HEK293 (cell line): ENCODE measurements at regions of chr4 and their contacts with region 1.

Region 1: GRCh38 chr4:162497564-162498167 is 333.9 kb upstream of the FSTL5 start:
- H3K4me3 ChIP-seq: no peak overlapping the region
- H3K27ac ChIP-seq: no peak overlapping the region
- H3K4me1 ChIP-seq: no peaks in the 10 kb centered on the region
- CTCF ChIP-seq: 0 out of 2 replicates have a peak, but pooled peaks have one; percentile 36

Region 2: DNA sequence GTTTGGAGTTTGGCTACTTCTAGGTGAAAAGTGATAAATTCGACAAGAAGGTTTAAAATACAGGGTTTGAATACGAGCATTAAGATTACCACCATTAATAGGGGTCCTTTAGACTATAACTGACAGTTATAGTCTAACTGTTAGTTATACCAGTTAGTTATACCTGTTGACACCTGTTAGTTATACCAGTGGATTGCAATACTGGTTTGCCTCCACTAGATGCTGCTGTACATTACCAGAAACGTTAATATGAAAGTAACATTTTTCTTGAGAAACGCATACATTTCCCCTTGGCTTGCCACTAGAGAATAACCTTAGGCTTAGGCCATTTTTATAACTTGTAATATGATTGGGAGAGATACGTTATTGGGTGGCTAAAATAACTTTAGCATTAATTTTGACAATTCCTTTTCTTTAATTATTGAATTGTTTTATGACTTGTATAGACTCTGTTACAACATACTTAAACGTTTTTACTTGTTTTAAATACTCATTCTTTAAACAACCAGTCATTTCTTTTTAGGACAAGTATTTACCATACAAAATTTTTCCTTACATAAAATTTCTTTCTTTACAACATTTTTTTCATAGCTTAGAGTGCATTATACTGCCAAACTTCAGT is 1245.0 kb before region 1 on chr4:
- CTCF ChIA-PET with region 1: no interaction called
- POLR2A ChIA-PET with region 1: no interaction called
- H3K4me3 ChIP-seq: no peak overlapping the region
- H3K27ac ChIP-seq: no peak overlapping the region
- H3K4me1 ChIP-seq: no peaks in the 10 kb centered on the region
- CTCF ChIP-seq: no peak

Region 3: DNA sequence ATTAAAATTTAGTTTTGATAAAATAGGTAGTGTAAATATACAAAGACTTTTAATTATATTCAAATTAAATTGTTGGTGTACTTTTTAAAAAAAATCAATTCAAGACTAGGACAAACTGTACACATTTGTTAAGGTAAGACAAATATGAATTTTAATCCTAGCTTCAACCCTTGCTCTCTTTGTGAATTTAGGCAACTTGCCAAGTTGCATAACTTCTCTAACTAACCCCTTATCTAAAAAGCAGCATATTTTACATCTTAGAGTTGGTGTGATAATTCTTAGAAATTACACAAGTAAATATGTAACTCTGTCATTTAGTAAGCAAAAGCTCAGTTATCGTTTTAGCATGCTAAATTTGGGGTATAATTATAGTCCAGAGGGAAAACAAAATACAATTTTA is 255.8 kb before region 1 on chr4:
- CTCF ChIA-PET with region 1: no interaction called
- POLR2A ChIA-PET with region 1: no interaction called
- H3K4me3 ChIP-seq: no peak overlapping the region
- H3K27ac ChIP-seq: no peak overlapping the region
- H3K4me1 ChIP-seq: no peaks in the 10 kb centered on the region
- CTCF ChIP-seq: no peak

Region 4: DNA sequence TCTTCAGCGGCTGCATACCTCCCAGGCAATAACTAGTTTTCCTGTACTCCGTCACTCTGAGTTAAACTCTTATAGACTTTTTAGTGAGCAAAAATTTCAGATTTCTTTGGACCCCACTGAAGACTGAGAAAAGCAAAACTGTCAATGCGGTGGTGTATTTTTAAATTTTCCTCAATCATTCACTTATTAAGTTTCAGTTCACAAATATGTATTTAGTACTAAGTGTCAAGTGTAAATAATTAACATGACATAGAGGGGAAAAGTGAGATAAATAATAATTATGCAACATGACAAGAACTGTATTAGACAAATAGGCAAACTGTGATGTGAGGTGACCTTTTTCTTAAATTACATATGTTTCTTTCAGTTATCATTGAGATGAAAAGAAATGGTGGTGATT is 544.6 kb after region 1 on chr4:
- CTCF ChIA-PET with region 1: interaction called, 24 read pairs
- POLR2A ChIA-PET with region 1: no interaction called
- H3K4me3 ChIP-seq: no peak overlapping the region
- H3K27ac ChIP-seq: no peak overlapping the region
- H3K4me1 ChIP-seq: no peaks in the 10 kb centered on the region
- CTCF ChIP-seq: no peak